ENCODE measurements at regions of chr17 and their contacts with region 1.

Region 1: GRCh38 chr17:65314212-65314611 is 177.0 kb downstream of the RGS9 start:
- DNase-seq: no peak
- ATAC-seq: no peak
- H3K4me3 ChIP-seq: no peak overlapping the region
- H3K27ac ChIP-seq: no peak overlapping the region
- H3K4me1 ChIP-seq: no peaks in the 10 kb centered on the region
- H3K27me3 ChIP-seq: peaks cover 10% of the 10 kb centered on the region
- CTCF ChIP-seq: no peak

Region 2: DNA sequence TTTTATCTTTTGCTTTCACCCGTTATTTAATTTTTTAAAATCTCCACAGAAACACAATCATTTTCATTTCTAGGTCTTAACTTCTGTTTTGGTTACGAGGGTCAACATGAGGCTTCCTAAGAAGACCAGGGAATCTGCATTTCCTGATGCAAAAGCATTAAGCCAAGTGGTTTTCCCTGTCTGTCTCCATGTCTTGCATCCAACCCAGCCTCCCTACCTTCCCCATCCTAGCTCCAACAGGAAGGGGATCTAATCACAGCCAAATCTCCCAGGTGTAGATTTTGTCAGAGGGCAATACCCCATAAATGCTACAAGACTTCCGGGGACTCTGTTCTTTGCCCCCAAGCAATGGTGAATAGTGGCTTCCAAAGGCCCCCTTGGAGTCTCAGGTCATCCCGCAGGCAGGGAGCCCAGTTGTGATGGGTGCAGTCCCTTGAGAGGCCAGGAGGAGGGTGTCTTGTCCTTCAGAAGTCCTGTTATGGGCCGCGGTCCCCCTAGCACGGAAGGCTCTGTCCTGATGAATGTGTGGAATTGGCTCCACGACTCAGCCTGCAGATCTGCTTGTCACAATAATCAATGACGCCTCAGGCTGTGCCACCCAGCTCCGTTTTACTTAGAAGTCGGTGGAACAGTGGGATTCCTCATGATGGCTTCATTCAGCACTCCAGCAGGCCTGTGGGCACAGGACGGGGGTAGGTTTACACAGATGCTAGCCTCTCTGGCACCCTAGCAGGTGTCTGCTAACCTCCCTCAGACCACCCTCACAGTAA is 36.0 kb before region 1 on chr17:
- CTCF ChIA-PET with region 1: no interaction called
- POLR2A ChIA-PET with region 1: no interaction called
- in situ Hi-C with region 1: no loop called
- intact Hi-C with region 1: no loop called
- DNase-seq: no peak
- ATAC-seq: peak; percentile 95
- H3K4me3 ChIP-seq: no peak overlapping the region
- H3K27ac ChIP-seq: no peak overlapping the region
- H3K4me1 ChIP-seq: peaks cover 3% of the 10 kb centered on the region; the same call in 1 of the 2 replicates
- H3K27me3 ChIP-seq: no peaks in the 10 kb centered on the region; the same call in 1 of the 2 replicates
- CTCF ChIP-seq: peak; percentile 70

Region 3: GRCh38 chr17:65409381-65409780 is 95.2 kb after region 1 on chr17:
- CTCF ChIA-PET with region 1: no interaction called
- POLR2A ChIA-PET with region 1: no interaction called
- in situ Hi-C with region 1: no loop called
- intact Hi-C with region 1: no loop called
- DNase-seq: no peak
- ATAC-seq: no peak
- H3K4me3 ChIP-seq: no peak overlapping the region
- H3K27ac ChIP-seq: no peak overlapping the region
- H3K4me1 ChIP-seq: no peaks in the 10 kb centered on the region
- H3K27me3 ChIP-seq: no peaks in the 10 kb centered on the region
- CTCF ChIP-seq: no peak

Region 4: GRCh38 chr17:65841089-65841488 is 526.9 kb after region 1 on chr17:
- CTCF ChIA-PET with region 1: no interaction called
- POLR2A ChIA-PET with region 1: interaction called, 10 read pairs
- in situ Hi-C with region 1: no loop called
- intact Hi-C with region 1: no loop called
- DNase-seq: no peak
- ATAC-seq: no peak
- H3K4me3 ChIP-seq: no peak overlapping the region
- H3K27ac ChIP-seq: no peak overlapping the region
- H3K4me1 ChIP-seq: no peaks in the 10 kb centered on the region
- H3K27me3 ChIP-seq: no peaks in the 10 kb centered on the region
- CTCF ChIP-seq: no peak